HepG2 (cell line): ENCODE measurements at regions of chr6 and their contacts with region 1.

Region 1: GRCh38 chr6:155400654-155400965 is 55.0 kb downstream of the NOX3 start:
- DNase-seq: no peak
- ATAC-seq: no peak
- H3K4me3 ChIP-seq: no peak overlapping the region
- H3K27ac ChIP-seq: peak overlapping the region; percentile 96
- H3K4me1 ChIP-seq: peaks cover 81% of the 10 kb centered on the region
- H3K27me3 ChIP-seq: no peaks in the 10 kb centered on the region
- CTCF ChIP-seq: no peak
- EP300 ChIP-seq: no peak
- POLR2A ChIP-seq: no peak
- RAD21 ChIP-seq: no peak

Region 2: GRCh38 chr6:155412335-155412734 is 11.7 kb after region 1 on chr6:
- CTCF ChIA-PET with region 1: no interaction called
- POLR2A ChIA-PET with region 1: interaction called, 16 read pairs
- in situ Hi-C with region 1: no loop called
- intact Hi-C with region 1: no loop called
- DNase-seq: no peak
- ATAC-seq: no peak
- H3K4me3 ChIP-seq: no peak overlapping the region
- H3K27ac ChIP-seq: no peak overlapping the region
- H3K4me1 ChIP-seq: peaks cover 55% of the 10 kb centered on the region
- H3K27me3 ChIP-seq: no peaks in the 10 kb centered on the region
- CTCF ChIP-seq: no peak
- EP300 ChIP-seq: no peak
- POLR2A ChIP-seq: no peak
- RAD21 ChIP-seq: no peak

Region 3: DNA sequence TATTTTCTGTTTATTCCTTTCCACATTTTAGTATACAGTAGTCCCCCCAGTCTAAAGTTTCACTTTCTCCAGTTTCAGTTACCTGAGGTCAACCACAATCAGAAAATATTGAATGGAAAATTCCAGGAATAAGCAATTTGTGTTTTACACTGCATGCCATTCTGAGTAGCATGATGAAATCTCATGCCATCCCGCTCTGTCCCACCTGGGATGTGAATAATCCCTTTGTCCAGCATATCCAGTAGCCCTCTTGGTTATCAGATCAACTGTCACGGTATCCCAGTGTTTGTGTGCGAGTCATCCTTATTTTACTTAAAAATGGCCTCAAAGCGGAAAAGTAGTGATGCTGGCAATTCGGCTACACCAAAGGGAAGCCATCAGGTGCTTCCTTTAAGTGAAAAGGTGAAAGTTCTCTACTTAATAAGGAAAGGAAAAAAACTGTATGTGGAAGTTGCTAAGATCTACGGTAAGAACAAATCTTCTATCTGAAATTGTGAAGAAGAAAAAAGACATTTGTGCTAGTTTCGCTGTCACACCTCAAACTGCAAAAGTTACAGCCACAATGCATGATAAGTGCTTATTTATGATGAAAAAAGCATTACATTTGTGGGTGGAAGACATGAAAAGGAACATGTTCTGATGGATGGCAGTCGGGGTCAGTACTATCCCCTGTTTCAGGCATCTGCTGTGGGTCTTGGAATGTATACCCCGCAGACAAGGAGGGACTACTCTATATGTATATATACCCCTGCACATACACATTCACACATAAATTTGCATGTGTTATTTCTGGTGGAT is 43.7 kb after region 1 on chr6:
- CTCF ChIA-PET with region 1: no interaction called
- POLR2A ChIA-PET with region 1: interaction called, 5 read pairs
- in situ Hi-C with region 1: no loop called
- intact Hi-C with region 1: loop called (anchors 1 kb)
- DNase-seq: peak; percentile 100
- ATAC-seq: peak; percentile 100
- H3K4me3 ChIP-seq: peak overlapping the region in 1 of 3 experiments; percentile 28; a peak in 1 of 6 replicates
- H3K27ac ChIP-seq: peak overlapping the region; percentile 96
- H3K4me1 ChIP-seq: peaks cover 78% of the 10 kb centered on the region
- H3K27me3 ChIP-seq: no peaks in the 10 kb centered on the region
- CTCF ChIP-seq: no peak
- EP300 ChIP-seq: peak; percentile 99
- POLR2A ChIP-seq: peak in 1 of 2 experiments; percentile 59; a peak in 2 of 4 replicates
- RAD21 ChIP-seq: peak; percentile 37

Region 4: DNA sequence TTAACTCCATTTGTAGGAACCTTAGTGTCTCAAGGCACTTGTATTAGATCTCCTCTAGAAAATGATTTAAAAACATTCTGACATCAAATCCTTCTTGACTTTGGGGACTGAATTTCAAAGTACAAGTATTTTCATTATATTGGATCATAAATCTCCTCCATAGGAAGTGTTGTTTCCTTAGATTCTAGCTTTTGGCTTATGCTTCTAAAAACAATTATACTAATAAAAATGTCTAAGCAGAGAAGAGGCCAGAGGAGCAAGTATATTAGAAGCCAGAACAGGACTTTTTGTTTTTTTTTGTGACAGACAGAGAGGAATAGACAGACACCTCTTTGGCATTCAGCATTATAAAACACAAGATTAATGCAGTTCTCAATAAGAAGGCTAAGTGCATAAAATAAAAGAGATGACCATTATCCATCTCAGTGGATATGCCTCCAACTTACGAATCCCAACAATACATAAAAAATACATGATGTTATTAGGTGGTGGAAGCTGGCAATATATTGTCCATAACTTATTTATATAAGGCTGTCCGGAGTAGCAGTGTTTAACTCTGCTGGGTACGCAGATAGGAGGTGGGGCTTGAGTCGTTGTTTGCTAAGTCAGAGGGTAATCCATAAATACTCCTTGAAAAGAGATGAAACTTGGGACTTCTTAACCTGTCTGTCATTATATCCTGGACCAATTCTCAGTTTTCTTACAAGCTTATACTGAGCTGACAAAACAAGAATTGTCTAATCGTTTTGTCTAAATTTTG is 86.9 kb after region 1 on chr6:
- CTCF ChIA-PET with region 1: no interaction called
- POLR2A ChIA-PET with region 1: interaction called, 36 read pairs
- in situ Hi-C with region 1: no loop called
- intact Hi-C with region 1: loop called (anchors 1 kb)
- DNase-seq: peak; percentile 52
- ATAC-seq: no peak
- H3K4me3 ChIP-seq: no peak overlapping the region; a peak in 1 of 6 replicates
- H3K27ac ChIP-seq: peak overlapping the region; percentile 84
- H3K4me1 ChIP-seq: peaks cover 96% of the 10 kb centered on the region
- H3K27me3 ChIP-seq: no peaks in the 10 kb centered on the region
- CTCF ChIP-seq: no peak
- EP300 ChIP-seq: peak in 1 of 2 experiments; percentile 56; a peak in 2 of 4 replicates
- POLR2A ChIP-seq: peak in 1 of 2 experiments; percentile 25; a peak in 1 of 4 replicates
- RAD21 ChIP-seq: no peak

Region 5: GRCh38 chr6:155493694-155494143 is 93.1 kb after region 1 on chr6:
- CTCF ChIA-PET with region 1: no interaction called
- POLR2A ChIA-PET with region 1: interaction called, 18 read pairs
- in situ Hi-C with region 1: no loop called
- intact Hi-C with region 1: loop called (anchors 2 kb)
- DNase-seq: peak; percentile 91
- ATAC-seq: peak; percentile 20; the same call in 2 of the 3 replicates
- H3K4me3 ChIP-seq: no peak overlapping the region
- H3K27ac ChIP-seq: peak overlapping the region; percentile 76
- H3K4me1 ChIP-seq: peaks cover 92% of the 10 kb centered on the region
- H3K27me3 ChIP-seq: no peaks in the 10 kb centered on the region
- CTCF ChIP-seq: no peak
- EP300 ChIP-seq: peak in 1 of 2 experiments; percentile 92; a peak in 2 of 4 replicates
- POLR2A ChIP-seq: no peak
- RAD21 ChIP-seq: no peak

Region 6: GRCh38 chr6:157107915-157108651 is 1707.5 kb after region 1 on chr6:
- CTCF ChIA-PET with region 1: no interaction called
- POLR2A ChIA-PET with region 1: no interaction called
- in situ Hi-C with region 1: no loop called
- intact Hi-C with region 1: no loop called
- DNase-seq: no peak
- ATAC-seq: no peak; the same call in 2 of the 3 replicates
- H3K4me3 ChIP-seq: no peak overlapping the region
- H3K27ac ChIP-seq: no peak overlapping the region
- H3K4me1 ChIP-seq: no peaks in the 10 kb centered on the region
- H3K27me3 ChIP-seq: no peaks in the 10 kb centered on the region
- CTCF ChIP-seq: no peak
- EP300 ChIP-seq: no peak
- POLR2A ChIP-seq: no peak
- RAD21 ChIP-seq: no peak